Heart right ventricle (tissue), 16 donors: ENCODE measurements at regions of chr1 and their contacts with region 1.

Region 1: DNA sequence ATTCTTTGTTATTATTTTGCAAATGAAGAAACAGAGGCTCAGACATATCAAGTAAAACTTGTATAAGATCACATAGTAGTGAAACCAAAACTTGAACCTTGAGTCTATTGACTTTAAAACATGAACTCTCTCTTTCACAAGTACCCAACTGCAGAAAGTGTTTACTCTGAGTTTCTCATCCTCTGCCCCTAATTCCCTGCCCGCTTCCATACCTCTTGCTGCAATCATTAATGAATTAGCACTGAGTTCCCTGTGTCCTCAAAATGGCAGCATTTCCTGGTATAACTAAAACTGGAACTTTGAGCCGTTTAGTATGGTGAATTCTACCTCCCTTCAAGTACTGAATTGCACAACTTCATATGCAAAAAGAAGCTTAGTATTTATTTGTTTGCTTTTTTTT is 147.7 kb upstream of the DNAH14 start:
- DNase-seq: no peak
- ATAC-seq: no peak
- H3K4me3 ChIP-seq: no peak overlapping the region
- H3K27ac ChIP-seq: no peak overlapping the region
- H3K4me1 ChIP-seq: peaks cover 0 to 22% (median 3%) of the 10 kb centered on the region in 9 donors
- H3K27me3 ChIP-seq: peaks cover 0 to 3% (median 0%) of the 10 kb centered on the region in 7 donors
- CTCF ChIP-seq: no peak

Region 2: GRCh38 chr1:223670458-223671168 is 1111.2 kb before region 1 on chr1:
- intact Hi-C with region 1: no loop called
- DNase-seq: no peak
- ATAC-seq: peak in 1 of 8 donors; percentile 55
- H3K4me3 ChIP-seq: no peak overlapping the region
- H3K27ac ChIP-seq: no peak overlapping the region
- H3K4me1 ChIP-seq: no peaks in the 10 kb centered on the region
- H3K27me3 ChIP-seq: peaks cover 0 to 6% (median 0%) of the 10 kb centered on the region in 7 donors
- CTCF ChIP-seq: peak in 7 of 9 donors; percentile 39 to 56 (median 42)

Region 3: GRCh38 chr1:224521904-224522734 is 259.7 kb before region 1 on chr1:
- intact Hi-C with region 1: no loop called
- DNase-seq: no peak
- ATAC-seq: no peak
- H3K4me3 ChIP-seq: no peak overlapping the region
- H3K27ac ChIP-seq: no peak overlapping the region
- H3K4me1 ChIP-seq: no peaks in the 10 kb centered on the region
- H3K27me3 ChIP-seq: no peaks in the 10 kb centered on the region
- CTCF ChIP-seq: no peak

Region 4: DNA sequence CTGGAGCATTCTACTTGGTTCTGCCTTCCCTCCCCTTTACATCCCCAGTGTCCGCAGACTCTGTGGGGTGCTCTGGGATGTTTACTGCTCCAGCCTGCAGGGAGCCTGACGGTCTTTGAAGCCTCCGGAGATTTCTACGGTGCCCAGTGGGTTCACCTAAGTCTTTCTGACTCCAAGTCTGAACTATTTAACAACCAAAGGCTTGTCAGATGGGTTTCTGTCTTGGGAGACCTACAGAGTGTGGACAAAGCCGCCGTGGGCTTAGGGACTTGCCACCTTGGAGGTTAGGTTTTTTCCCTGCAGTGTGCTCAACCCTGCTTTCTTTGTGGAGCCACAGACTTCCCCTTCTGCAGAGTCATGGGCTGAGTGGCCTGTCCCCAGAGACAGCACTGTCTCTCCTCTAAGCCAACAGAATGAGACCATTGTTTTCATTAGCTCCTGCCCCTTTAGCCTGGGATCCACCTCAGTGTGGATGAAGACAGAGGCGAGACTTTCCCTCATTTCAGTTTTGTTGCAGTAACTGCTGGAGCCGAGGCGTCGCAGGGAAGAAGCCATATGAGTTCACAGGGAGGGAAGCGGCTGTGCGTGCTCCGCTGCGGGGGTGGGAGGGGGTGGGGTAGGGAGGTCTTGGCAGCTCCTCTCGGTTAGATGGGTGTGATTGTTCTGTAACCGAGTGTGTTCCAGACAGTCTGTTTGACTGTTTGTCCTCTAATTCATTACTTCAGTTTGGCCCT is 45.0 kb before region 1 on chr1:
- intact Hi-C with region 1: loop called in 1 of 10 experiments (anchors 1 kb)
- DNase-seq: peak; percentile 16 to 20
- ATAC-seq: peak; percentile 46 to 74 (median 62)
- H3K4me3 ChIP-seq: peak overlapping the region in 1 of 10 donors; percentile 9
- H3K27ac ChIP-seq: peak overlapping the region in 6 of 10 donors; percentile 16 to 68 (median 43)
- H3K4me1 ChIP-seq: peaks cover 4 to 41% (median 26%) of the 10 kb centered on the region in 9 donors
- H3K27me3 ChIP-seq: peaks cover 0 to 5% (median 0%) of the 10 kb centered on the region in 7 donors
- CTCF ChIP-seq: no peak